Gastrocnemius medialis (tissue), 4 donors: ENCODE measurements at regions of chr2 and their contacts with region 1.

Region 1: GRCh38 chr2:175855794-175856453 is 146.1 kb downstream of the LNPK start:
- DNase-seq: peak; percentile 86 to 93
- ATAC-seq: peak; percentile 96
- H3K4me3 ChIP-seq: peak overlapping the region; percentile 21 to 39 (median 34)
- H3K27ac ChIP-seq: peak overlapping the region; percentile 84 to 91 (median 86)
- H3K4me1 ChIP-seq: peaks cover 30 to 36% of the 10 kb centered on the region in 2 donors
- H3K27me3 ChIP-seq: no peaks in the 10 kb centered on the region
- CTCF ChIP-seq: no peak
- POLR2A ChIP-seq: peak; percentile 36 to 62

Region 2: DNA sequence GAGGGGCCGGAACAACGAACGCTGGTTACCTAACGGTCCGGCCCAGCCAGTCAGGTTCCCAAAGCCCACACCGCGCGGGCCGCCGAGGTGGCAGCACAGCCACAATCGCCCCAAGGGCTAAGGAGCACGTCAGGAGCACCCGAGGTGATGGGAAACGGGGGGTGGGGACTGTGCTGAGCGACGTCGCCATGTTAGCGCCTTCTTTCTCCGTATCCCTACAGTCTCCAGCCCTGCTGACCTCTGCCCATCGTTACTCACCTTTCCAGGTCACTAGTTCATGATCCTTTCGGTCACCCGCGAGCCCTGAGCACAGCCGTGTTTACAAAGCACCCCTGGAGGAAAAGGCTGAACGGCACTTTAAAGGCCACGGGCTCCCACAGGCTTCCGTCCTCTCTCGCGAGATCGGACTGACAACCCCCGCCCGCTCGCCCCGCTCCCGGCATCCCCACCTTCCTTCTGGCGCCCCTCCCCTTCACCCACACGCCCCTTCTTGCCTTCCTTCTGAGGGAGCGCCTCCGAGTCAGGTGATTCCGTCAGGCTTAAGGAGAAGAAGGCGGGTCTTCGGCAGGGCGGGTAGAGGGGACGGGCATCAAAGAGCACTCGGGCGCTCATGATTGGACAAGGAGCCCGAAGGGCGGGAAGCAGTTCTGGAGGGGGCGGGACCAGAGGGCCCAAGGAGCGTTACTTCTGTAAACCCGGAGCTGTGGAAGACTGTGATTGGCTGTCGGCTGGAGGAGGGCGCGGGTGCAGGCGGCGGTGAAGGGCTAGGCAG is 687.9 kb before region 1 on chr2 and contains the start of gene ATF2:
- in situ Hi-C with region 1: no loop called
- intact Hi-C with region 1: loop called (anchors 2 kb)
- DNase-seq: peak; percentile 99
- ATAC-seq: peak; percentile 95 to 97
- H3K4me3 ChIP-seq: peak within 1 kb of the TSS; percentile 82 to 95 (median 94)
- H3K27ac ChIP-seq: peak within 1 kb of the TSS; percentile 94 to 98 (median 96)
- H3K4me1 ChIP-seq: peaks cover 14 to 15% of the 10 kb centered on the region in 2 donors
- H3K27me3 ChIP-seq: no peaks in the 10 kb centered on the region
- CTCF ChIP-seq: no peak
- POLR2A ChIP-seq: peak; percentile 59 to 83
- total RNA-seq, gene ATF2: 19.5 to 28.1 (median 20.9) TPM

Region 3: GRCh38 chr2:175755169-175755568 is 100.8 kb before region 1 on chr2:
- in situ Hi-C with region 1: no loop called
- intact Hi-C with region 1: loop called (anchors 10 kb)
- DNase-seq: no peak
- ATAC-seq: no peak
- H3K4me3 ChIP-seq: no peak overlapping the region
- H3K27ac ChIP-seq: peak overlapping the region in 1 of 4 donors; percentile 64
- H3K4me1 ChIP-seq: peaks cover 0 to 4% of the 10 kb centered on the region in 2 donors
- H3K27me3 ChIP-seq: no peaks in the 10 kb centered on the region
- CTCF ChIP-seq: no peak
- POLR2A ChIP-seq: no peak

Region 4: GRCh38 chr2:175929850-175930249 is 73.9 kb after region 1 on chr2:
- in situ Hi-C with region 1: no loop called
- intact Hi-C with region 1: loop called (anchors 1 kb)
- DNase-seq: peak; percentile 31 to 35
- ATAC-seq: peak; percentile 99
- H3K4me3 ChIP-seq: no peak overlapping the region
- H3K27ac ChIP-seq: peak overlapping the region; percentile 65 to 85 (median 84)
- H3K4me1 ChIP-seq: peaks cover 26 to 33% of the 10 kb centered on the region in 2 donors
- H3K27me3 ChIP-seq: no peaks in the 10 kb centered on the region
- CTCF ChIP-seq: no peak
- POLR2A ChIP-seq: peak; percentile 7 to 42

Region 5: GRCh38 chr2:176079831-176080539 is 224.1 kb after region 1 on chr2:
- in situ Hi-C with region 1: no loop called
- intact Hi-C with region 1: loop called (anchors 5 kb)
- DNase-seq: no peak
- ATAC-seq: peak; percentile 28 to 63
- H3K4me3 ChIP-seq: peak overlapping the region; percentile 12 to 39 (median 29)
- H3K27ac ChIP-seq: no peak overlapping the region
- H3K4me1 ChIP-seq: peaks cover 17 to 21% of the 10 kb centered on the region in 2 donors
- H3K27me3 ChIP-seq: peaks cover 93 to 97% (median 94%) of the 10 kb centered on the region in 3 donors
- CTCF ChIP-seq: peak; percentile 55 to 91 (median 69)
- POLR2A ChIP-seq: no peak